Caco-2 (cell line): ENCODE measurements at regions of chr11 and their contacts with region 1.

Region 1: DNA sequence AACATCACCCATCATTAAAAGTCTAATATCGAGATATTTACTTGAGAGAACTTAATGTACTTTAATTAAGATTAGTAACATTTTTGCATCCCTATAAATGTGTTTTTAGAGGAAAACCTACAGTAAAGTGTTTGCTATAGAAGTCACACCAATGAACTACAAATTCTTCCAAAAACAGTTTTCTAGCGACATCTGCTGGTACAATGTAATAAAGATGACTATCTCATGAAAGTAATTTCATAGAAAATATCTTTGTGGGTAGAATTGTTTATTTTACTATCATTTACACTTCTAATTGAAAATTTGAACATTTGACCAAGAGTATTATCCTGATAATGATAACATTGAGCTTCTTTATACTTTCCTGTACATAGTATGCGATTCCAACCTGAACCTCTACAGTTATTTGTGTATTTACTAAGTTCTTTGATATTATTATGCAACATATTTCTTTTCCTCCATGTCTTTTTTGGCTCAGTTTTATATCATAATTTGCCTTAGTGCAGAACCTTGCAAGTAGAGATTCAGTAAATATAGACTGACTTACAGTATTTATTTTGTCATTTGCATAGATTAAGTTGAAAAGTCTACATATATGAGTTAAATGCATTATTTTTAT is 252.7 kb downstream of the TMEM135 start:
- DNase-seq: peak in 1 of 2 experiments; percentile 76
- H3K4me3 ChIP-seq: no peak overlapping the region
- H3K4me3 Mint-ChIP-seq: no peak overlapping the region
- H3K27ac Mint-ChIP-seq: no peak overlapping the region
- H3K4me1 ChIP-seq: no peaks in the 10 kb centered on the region
- H3K4me1 Mint-ChIP-seq: peaks cover 5% of the 10 kb centered on the region
- H3K27me3 ChIP-seq: no peaks in the 10 kb centered on the region
- H3K27me3 Mint-ChIP-seq: no peaks in the 10 kb centered on the region
- CTCF ChIP-seq: peak; percentile 78 to 84

Region 2: GRCh38 chr11:86869966-86870570 is 420.3 kb before region 1 on chr11:
- CTCF ChIA-PET with region 1: no interaction called
- POLR2A ChIA-PET with region 1: no interaction called
- intact Hi-C with region 1: loop called (anchors 1 kb)
- DNase-seq: peak; percentile 72 to 76
- H3K4me3 ChIP-seq: no peak overlapping the region
- H3K4me3 Mint-ChIP-seq: no peak overlapping the region
- H3K27ac Mint-ChIP-seq: no peak overlapping the region
- H3K4me1 ChIP-seq: peaks cover 11% of the 10 kb centered on the region
- H3K4me1 Mint-ChIP-seq: peaks cover 13% of the 10 kb centered on the region
- H3K27me3 ChIP-seq: no peaks in the 10 kb centered on the region
- H3K27me3 Mint-ChIP-seq: no peaks in the 10 kb centered on the region
- CTCF ChIP-seq: peak; percentile 95 to 98

Region 3: GRCh38 chr11:86938900-86939880 is 351.2 kb before region 1 on chr11:
- CTCF ChIA-PET with region 1: interaction called, 10 read pairs
- POLR2A ChIA-PET with region 1: no interaction called
- intact Hi-C with region 1: loop called (anchors 1 kb)
- DNase-seq: peak in 1 of 2 experiments; percentile 75
- H3K4me3 ChIP-seq: no peak overlapping the region
- H3K4me3 Mint-ChIP-seq: peak overlapping the region; percentile 60
- H3K27ac Mint-ChIP-seq: peak overlapping the region; percentile 84
- H3K4me1 ChIP-seq: peaks cover 51% of the 10 kb centered on the region
- H3K4me1 Mint-ChIP-seq: peaks cover 52% of the 10 kb centered on the region
- H3K27me3 ChIP-seq: no peaks in the 10 kb centered on the region
- H3K27me3 Mint-ChIP-seq: no peaks in the 10 kb centered on the region
- CTCF ChIP-seq: peak; percentile 79 to 83

Region 4: GRCh38 chr11:86990515-86990914 is 299.9 kb before region 1 on chr11:
- CTCF ChIA-PET with region 1: no interaction called
- POLR2A ChIA-PET with region 1: no interaction called
- intact Hi-C with region 1: loop called (anchors 1 kb)
- DNase-seq: peak; percentile 58 to 70
- H3K4me3 ChIP-seq: no peak overlapping the region
- H3K4me3 Mint-ChIP-seq: no peak overlapping the region
- H3K27ac Mint-ChIP-seq: peak overlapping the region; percentile 8
- H3K4me1 ChIP-seq: peaks cover 28% of the 10 kb centered on the region
- H3K4me1 Mint-ChIP-seq: peaks cover 37% of the 10 kb centered on the region
- H3K27me3 ChIP-seq: no peaks in the 10 kb centered on the region
- H3K27me3 Mint-ChIP-seq: no peaks in the 10 kb centered on the region
- CTCF ChIP-seq: no peak

Region 5: GRCh38 chr11:87037450-87038234 is 252.8 kb before region 1 on chr11 and contains the start of gene TMEM135:
- CTCF ChIA-PET with region 1: no interaction called
- POLR2A ChIA-PET with region 1: no interaction called
- intact Hi-C with region 1: loop called (anchors 5 kb)
- DNase-seq: peak; percentile 99 to 100
- H3K4me3 ChIP-seq: peak within 1 kb of the TSS; percentile 83
- H3K4me3 Mint-ChIP-seq: peak within 1 kb of the TSS; percentile 97
- H3K27ac Mint-ChIP-seq: peak within 1 kb of the TSS; percentile 81
- H3K4me1 ChIP-seq: peaks cover 11% of the 10 kb centered on the region
- H3K4me1 Mint-ChIP-seq: peaks cover 59% of the 10 kb centered on the region
- H3K27me3 ChIP-seq: no peaks in the 10 kb centered on the region
- H3K27me3 Mint-ChIP-seq: no peaks in the 10 kb centered on the region
- CTCF ChIP-seq: peak in 1 of 2 experiments; percentile 62
- total RNA-seq, gene TMEM135: 88.6 and 95.2 TPM in 2 replicates

Region 6: GRCh38 chr11:87236368-87236767 is 54.0 kb before region 1 on chr11:
- CTCF ChIA-PET with region 1: no interaction called
- POLR2A ChIA-PET with region 1: no interaction called
- intact Hi-C with region 1: no loop called
- DNase-seq: no peak
- H3K4me3 ChIP-seq: no peak overlapping the region
- H3K4me3 Mint-ChIP-seq: no peak overlapping the region
- H3K27ac Mint-ChIP-seq: no peak overlapping the region
- H3K4me1 ChIP-seq: peaks cover 10% of the 10 kb centered on the region; the same call in 1 of the 2 replicates
- H3K4me1 Mint-ChIP-seq: no peaks in the 10 kb centered on the region
- H3K27me3 ChIP-seq: no peaks in the 10 kb centered on the region
- H3K27me3 Mint-ChIP-seq: no peaks in the 10 kb centered on the region
- CTCF ChIP-seq: no peak